Dendritic cell treated with granulocyte-macrophage colony-stimulating factor and Interleukin-4, amounts not matched to agents 40 ng/mL and 50 ng/mL, for 4 days (primary cell): ENCODE measurements at regions of chr16 and their contacts with region 1.

Region 1: GRCh38 chr16:22206013-22206841 is at the start of gene EEF2K:
- H3K4me3 Mint-ChIP-seq: peak within 1 kb of the TSS; percentile 97
- H3K27ac Mint-ChIP-seq: peak within 1 kb of the TSS; percentile 99
- H3K4me1 Mint-ChIP-seq: peaks cover 46% of the 10 kb centered on the region
- H3K27me3 Mint-ChIP-seq: no peaks in the 10 kb centered on the region

Region 2: DNA sequence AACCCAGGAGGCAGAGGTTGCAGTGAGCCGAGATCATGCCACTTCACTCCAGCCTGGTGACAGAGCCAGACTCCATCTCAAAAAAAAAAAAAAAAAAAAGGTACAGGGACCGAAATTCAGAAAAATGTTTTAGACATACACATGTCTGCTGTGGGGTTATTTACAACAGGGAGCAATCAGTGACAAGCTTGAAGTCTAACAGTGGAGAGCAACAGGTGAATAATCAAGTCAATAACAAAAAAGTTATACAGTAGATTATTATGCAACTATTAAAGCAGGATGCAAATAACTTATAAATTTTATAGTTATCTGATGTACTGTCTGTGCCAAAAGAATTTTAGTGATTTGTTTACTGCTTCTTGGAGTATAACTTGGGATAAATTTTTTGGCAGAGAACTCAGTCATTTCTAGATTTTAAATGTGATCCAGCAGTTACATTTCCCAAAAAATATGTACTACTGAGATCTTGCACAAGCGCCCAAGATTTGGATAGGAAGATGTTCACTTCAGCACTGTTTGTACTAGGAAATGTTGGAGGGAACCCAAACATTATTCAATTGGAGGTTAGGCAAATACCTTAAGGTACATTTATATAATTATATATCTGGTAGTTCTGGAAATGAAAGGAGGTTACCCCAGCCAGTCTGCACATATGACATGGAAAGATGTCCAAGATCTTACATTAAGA is 33.9 kb after region 1 on chr16:
- intact Hi-C with region 1: loop called (anchors 1 kb)
- H3K4me3 Mint-ChIP-seq: no peak overlapping the region
- H3K27ac Mint-ChIP-seq: peak overlapping the region; percentile 73
- H3K4me1 Mint-ChIP-seq: peaks cover 30% of the 10 kb centered on the region
- H3K27me3 Mint-ChIP-seq: no peaks in the 10 kb centered on the region

Region 3: GRCh38 chr16:22297114-22297878 is 91.1 kb after region 1 on chr16 and contains the start of gene POLR3E:
- intact Hi-C with region 1: loop called (anchors 1 kb)
- H3K4me3 Mint-ChIP-seq: peak within 1 kb of the TSS; percentile 95
- H3K27ac Mint-ChIP-seq: peak within 1 kb of the TSS; percentile 94
- H3K4me1 Mint-ChIP-seq: peaks cover 41% of the 10 kb centered on the region
- H3K27me3 Mint-ChIP-seq: no peaks in the 10 kb centered on the region